Activated CD4-positive, alpha-beta T cell treated with anti-CD3 and anti-CD28 coated beads, Interleukin-2, amount 10 ng/mL, durations not matched to agents 24 days and 14 days (primary cell): ENCODE measurements at regions of chr10 and their contacts with region 1.

Region 1: GRCh38 chr10:127635882-127636281 is 86.8 kb downstream of the NPS start:
- DNase-seq: no peak
- H3K4me3 Mint-ChIP-seq: no peak overlapping the region
- H3K27ac Mint-ChIP-seq: no peak overlapping the region
- H3K4me1 Mint-ChIP-seq: no peaks in the 10 kb centered on the region
- H3K27me3 Mint-ChIP-seq: no peaks in the 10 kb centered on the region

Region 2: DNA sequence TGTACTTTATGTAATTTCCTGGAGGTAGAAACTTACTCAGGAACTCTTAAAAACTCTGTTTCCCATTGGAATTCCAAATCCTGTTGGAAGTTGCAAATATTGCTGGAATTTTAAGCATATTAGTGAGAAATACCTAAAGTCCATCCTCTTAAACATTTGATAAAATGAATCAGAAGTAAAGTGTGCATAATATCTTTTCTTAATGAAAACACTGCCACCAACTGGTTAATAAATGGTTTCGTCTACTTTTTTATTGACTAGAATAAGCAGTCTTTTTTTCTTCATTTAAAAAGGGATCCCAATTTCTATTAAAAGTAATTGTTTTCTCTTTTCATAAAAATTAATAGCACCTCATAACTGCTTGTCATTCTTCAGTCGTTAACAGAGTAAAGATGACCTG is 58.5 kb before region 1 on chr10:
- intact Hi-C with region 1: loop called (anchors 10 kb)
- DNase-seq: no peak
- H3K4me3 Mint-ChIP-seq: no peak overlapping the region
- H3K27ac Mint-ChIP-seq: no peak overlapping the region
- H3K4me1 Mint-ChIP-seq: no peaks in the 10 kb centered on the region
- H3K27me3 Mint-ChIP-seq: no peaks in the 10 kb centered on the region

Region 3: GRCh38 chr10:127679642-127680255 is 43.9 kb after region 1 on chr10:
- intact Hi-C with region 1: no loop called
- DNase-seq: peak; percentile 35
- H3K4me3 Mint-ChIP-seq: no peak overlapping the region
- H3K27ac Mint-ChIP-seq: no peak overlapping the region
- H3K4me1 Mint-ChIP-seq: no peaks in the 10 kb centered on the region
- H3K27me3 Mint-ChIP-seq: no peaks in the 10 kb centered on the region